Left ventricle myocardium inferior (tissue), 1 donor: ENCODE measurements at regions of chr1 and their contacts with region 1.

Region 1: DNA sequence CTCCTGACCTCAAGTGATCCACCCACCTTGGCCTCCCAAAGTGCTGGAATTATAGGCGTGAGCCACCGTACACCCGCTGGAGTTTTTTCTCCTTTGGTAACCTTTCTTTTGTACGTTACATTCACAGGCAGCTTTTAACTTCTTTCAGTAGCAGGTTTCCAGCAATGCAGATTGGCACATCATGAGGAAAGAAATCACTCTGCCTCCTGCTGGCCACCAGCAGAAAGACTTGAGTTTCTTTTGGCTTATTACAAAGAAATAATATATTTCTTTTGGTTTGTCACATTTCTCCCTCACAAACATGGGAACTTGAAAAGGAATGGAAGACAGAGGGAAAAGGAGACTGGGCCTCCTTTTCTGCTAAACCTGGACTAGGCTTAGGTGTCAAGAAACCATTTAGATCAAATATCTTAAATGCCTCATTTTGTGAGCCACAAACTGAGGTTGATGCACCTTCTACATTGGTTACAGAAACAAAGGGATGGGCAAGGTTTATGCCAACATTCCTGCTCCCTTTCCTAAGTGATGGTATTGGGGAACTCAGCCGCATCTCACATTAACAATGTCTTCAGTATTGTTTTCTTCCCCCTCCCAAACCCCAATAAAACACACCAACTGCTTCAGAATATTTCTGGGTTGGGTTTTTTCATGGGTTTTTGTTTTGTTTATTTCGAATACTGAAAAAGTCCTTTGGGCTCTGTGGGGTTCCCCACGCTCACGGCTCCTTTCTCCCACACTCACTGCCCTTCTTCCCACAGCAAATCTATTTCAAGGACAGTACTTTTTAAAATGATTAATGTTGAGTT is 7.7 kb downstream of the ENSA start:
- DNase-seq: no peak
- H3K4me3 ChIP-seq: no peak overlapping the region
- H3K27ac ChIP-seq: peak overlapping the region; percentile 80
- H3K4me1 ChIP-seq: peaks cover 73% of the 10 kb centered on the region
- H3K27me3 ChIP-seq: no peaks in the 10 kb centered on the region
- CTCF ChIP-seq: peak; percentile 76

Region 2: DNA sequence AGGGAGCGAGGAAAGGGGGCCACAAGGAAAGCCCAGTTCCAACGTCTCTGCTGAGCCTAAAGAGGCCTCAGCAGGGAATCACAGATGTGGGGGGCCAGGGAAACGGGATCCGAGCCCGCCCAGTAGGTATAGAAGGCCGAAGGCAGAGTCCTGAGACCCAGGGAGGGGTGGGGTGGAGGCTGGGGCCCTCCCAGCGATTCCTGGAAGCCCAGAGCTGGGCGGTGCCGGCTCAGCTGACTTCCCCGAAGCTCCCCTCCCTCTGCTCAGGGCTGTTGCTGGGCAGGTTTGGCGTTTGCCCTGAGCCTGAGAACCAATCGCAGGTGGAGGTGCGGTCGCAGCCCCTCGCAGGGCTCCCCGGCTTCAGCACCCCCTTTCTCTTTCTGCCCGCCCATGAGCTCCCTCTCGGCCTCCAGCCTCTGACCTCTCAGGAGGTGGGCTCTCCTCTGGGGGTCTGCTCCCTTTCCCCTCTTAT is 59.7 kb before region 1 on chr1:
- intact Hi-C with region 1: loop called (anchors 2 kb)
- DNase-seq: peak; percentile 95
- H3K4me3 ChIP-seq: peak overlapping the region; percentile 64
- H3K27ac ChIP-seq: peak overlapping the region; percentile 96
- H3K4me1 ChIP-seq: peaks cover 81% of the 10 kb centered on the region
- H3K27me3 ChIP-seq: no peaks in the 10 kb centered on the region
- CTCF ChIP-seq: no peak

Region 3: DNA sequence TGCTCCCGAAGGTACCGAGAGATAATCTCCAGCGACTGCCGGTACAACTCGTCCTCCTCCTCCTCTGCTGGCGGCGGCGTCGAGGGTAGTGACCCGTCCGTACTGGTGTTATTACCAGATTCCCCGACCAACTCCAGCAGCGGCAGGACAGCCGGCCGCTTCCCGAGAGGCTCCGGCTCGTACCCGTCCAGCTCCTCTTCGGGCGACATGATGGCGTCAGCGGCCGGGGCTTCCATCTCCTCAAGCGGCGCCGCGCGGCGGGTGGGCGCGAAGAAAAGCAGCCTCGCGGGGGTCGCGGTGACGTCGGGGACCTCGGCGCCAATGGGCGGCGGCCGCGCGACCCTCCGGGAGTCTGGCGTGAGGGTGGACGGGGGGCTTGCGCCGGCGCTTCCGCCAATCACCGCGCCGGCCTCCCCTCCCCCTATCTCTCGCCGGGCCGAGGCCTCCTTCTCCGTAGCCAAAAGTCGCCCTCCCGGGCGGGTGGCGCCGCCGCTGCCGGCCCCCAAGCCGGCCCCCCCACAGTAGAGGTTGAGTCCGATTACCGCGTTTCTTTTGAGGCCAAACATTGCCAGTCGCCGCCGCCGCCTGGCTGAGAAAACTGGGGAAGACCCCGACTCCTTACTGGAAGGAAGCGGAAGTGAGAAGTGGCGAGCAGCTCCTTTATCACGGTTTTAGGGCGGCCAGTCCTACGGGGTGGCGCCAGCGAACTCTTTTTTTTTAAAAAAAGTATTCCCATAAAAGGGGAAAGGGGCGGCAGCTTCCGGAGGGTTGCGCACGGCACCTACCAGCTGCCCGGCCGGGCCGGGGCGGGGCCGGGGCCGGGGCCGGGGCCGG is 42.5 kb before region 1 on chr1 and contains the start of gene MCL1:
- intact Hi-C with region 1: loop called (anchors 5 kb)
- DNase-seq: peak; percentile 95
- H3K4me3 ChIP-seq: peak within 1 kb of the TSS; percentile 81
- H3K27ac ChIP-seq: peak within 1 kb of the TSS; percentile 96
- H3K4me1 ChIP-seq: peaks cover 57% of the 10 kb centered on the region
- H3K27me3 ChIP-seq: no peaks in the 10 kb centered on the region
- CTCF ChIP-seq: no peak
- total RNA-seq, gene MCL1: 97.0 TPM